Gastrocnemius medialis (tissue), 4 donors: ENCODE measurements at regions of chr2 and their contacts with region 1.

Region 1: DNA sequence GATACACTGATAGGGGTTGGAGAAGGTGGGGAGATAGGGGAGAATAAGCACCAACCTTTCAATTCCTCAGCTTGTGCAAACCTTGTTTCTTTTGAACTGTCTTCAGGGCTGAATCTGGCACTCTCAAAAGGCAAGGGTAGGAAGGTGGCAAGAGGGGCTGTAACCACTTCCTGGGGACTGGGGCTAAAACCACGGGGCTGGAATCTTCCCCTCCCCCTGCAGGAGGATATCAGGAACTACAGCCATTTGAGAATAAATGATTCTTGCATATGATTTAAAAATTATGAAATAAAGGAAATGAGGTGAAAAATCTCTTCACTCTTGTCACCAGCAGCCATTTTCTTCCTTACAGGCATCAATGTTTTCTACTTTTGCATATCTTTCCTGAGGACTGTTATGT is 50.8 kb downstream of the ATOH8 start:
- DNase-seq: no peak
- ATAC-seq: peak in 1 of 2 donors; percentile 43
- H3K4me3 ChIP-seq: no peak overlapping the region
- H3K27ac ChIP-seq: no peak overlapping the region
- H3K4me1 ChIP-seq: peaks cover 8 to 11% of the 10 kb centered on the region in 2 donors
- H3K27me3 ChIP-seq: no peaks in the 10 kb centered on the region
- CTCF ChIP-seq: peak; percentile 47 to 75 (median 72)
- POLR2A ChIP-seq: no peak

Region 2: GRCh38 chr2:85635636-85636035 is 168.9 kb before region 1 on chr2:
- in situ Hi-C with region 1: loop called in 1 of 4 experiments (anchors 5 kb)
- intact Hi-C with region 1: no loop called
- DNase-seq: no peak
- ATAC-seq: no peak
- H3K4me3 ChIP-seq: no peak overlapping the region
- H3K27ac ChIP-seq: peak overlapping the region in 1 of 4 donors; percentile 1
- H3K4me1 ChIP-seq: no peaks in the 10 kb centered on the region
- H3K27me3 ChIP-seq: no peaks in the 10 kb centered on the region
- CTCF ChIP-seq: no peak
- POLR2A ChIP-seq: no peak

Region 3: DNA sequence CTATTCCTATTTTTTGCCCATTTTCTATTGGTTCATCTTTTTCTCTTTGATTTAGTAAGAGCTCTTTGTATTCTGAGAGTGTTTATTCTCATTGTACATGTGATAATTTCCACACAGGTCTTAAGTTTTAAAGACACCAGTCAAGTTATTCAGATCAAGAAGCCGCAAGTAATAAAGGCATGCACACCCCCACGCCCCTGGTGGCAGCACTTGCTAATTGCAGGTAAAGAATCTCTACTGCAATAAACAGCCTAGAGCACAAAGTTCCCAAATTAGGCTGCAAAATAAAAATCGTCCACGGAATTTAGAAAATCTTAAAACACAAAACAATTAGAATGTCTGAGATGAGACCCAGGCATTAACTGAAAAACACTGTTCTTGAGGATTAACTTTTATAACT is 39.0 kb after region 1 on chr2:
- in situ Hi-C with region 1: no loop called
- intact Hi-C with region 1: no loop called
- DNase-seq: no peak
- ATAC-seq: no peak
- H3K4me3 ChIP-seq: no peak overlapping the region
- H3K27ac ChIP-seq: no peak overlapping the region
- H3K4me1 ChIP-seq: no peaks in the 10 kb centered on the region
- H3K27me3 ChIP-seq: no peaks in the 10 kb centered on the region
- CTCF ChIP-seq: no peak
- POLR2A ChIP-seq: no peak